ENCODE measurements at regions of chr1 and their contacts with region 1.

Region 1: DNA sequence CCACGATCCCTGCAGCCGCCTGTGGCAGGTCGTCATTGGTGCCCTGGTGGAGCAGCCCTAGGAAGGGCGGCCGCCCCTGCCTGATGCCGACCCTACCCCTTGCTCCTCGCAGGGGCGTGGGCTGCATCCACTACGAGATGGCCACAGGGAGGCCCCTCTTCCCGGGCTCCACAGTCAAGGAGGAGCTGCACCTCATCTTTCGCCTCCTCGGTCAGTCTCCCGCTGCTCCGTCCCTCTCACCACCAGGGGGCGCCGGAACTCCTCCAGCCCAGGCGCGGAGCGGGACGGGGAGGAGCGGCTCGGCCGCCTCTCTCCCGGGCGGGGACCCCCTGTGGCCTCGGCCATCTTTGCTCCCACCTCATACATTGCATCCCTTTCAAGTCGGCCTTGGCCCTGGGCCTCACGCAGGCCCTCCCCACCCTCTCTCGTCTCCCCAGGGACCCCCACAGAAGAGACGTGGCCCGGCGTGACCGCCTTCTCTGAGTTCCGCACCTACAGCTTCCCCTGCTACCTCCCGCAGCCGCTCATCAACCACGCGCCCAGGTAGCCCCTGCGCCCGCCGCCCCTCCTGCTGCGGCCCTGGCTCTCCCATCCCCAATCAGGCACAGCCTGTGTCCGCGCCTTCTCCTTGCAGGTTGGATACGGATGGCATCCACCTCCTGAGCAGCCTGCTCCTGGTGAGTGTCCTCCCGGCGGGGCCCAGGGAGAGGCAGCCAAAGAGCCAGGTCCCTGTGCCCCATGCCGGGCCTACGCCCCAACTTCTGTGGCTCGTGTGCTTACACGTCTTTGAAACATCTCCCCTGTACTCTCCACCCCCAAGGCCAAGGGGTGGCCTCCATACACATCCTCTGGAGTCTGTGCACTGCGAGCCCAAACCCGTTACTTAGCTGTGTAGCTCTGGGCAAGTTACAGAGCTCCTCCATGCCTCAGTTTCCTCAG is 24.7 kb downstream of the CDK18 start:
- DNase-seq: peak; percentile 92
- ATAC-seq: peak; percentile 92

Region 2: DNA sequence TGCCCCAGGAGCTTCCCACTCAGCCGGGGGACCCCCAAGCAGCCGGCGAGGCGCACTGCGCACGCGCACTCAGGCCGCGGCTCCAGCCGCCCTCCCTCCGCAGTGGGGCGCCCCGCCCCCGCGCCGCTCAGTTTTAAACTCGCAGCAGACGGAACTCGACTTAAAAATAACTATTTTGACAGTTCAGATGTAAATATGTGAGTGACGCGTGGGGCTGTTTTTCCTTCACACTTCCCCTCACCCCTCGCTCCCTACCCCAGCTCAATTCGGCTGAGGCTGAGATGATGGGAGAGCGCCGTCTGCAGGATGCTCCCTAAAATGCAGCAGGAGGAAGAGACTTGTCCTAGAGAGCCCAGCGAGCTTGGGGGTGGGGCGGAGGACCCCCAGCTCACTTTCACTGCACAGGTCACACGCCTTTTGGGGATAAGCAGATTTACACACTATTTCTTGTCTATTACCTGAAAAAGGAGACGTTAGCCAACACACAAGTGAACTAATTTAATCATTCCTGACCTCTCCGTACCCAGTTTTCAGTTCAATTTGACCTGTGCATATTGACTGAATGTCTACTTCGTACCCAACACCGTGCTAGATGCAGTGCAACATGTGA is 98.4 kb before region 1 on chr1:
- intact Hi-C with region 1: loop called (anchors 10 kb)
- DNase-seq: peak; percentile 74
- ATAC-seq: peak; percentile 70

Region 3: DNA sequence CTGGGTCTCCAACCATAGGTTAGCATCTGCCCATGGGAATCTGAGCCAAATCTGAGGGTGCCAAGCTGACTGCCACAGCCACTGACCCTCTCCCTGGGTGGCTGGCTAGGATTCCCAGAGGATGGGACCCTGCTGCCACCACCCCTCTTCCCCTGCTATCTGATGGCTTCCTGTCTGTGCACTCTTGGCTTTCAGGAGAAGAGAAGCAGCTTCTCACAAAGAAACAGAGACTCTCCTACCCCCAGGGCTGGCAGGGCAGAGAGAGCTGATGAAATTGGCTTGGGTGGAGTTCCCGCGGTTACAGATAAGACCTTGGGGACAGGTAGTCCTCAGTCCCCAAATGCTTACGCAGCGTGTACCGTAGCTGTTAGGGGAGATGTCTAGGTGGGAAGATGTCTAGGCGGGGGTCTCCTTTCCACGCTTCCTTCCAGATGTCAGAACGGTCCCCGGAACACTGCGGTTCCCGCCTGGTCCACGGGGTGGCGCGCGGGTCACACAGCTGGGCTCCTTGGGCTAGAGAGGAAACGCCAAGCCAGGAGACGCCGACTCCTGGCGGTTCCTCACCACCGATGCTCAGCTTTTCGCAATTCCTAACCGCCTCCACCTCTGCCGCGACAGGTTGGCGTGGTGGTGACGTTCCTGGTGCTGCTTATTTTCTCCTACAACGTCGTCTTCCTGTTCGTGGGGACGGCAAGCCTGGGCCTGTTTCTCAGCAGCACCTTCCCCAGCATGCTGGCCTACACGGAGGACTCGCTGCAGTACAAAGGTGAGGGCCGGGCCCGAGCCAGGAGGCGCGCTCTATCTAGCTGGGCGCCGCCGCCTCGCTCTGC is 62.6 kb after region 1 on chr1:
- intact Hi-C with region 1: loop called (anchors 5 kb)
- DNase-seq: peak; percentile 92
- ATAC-seq: peak; percentile 95

Region 4: GRCh38 chr1:205658943-205659581 is 129.9 kb after region 1 on chr1:
- intact Hi-C with region 1: loop called (anchors 2 kb)
- DNase-seq: peak; percentile 90
- ATAC-seq: peak; percentile 87